Activated B cell treated with CpG ODN at 0.5 μM for 24 hours (primary cell): ENCODE measurements at regions of chr11 and their contacts with region 1.

Region 1: DNA sequence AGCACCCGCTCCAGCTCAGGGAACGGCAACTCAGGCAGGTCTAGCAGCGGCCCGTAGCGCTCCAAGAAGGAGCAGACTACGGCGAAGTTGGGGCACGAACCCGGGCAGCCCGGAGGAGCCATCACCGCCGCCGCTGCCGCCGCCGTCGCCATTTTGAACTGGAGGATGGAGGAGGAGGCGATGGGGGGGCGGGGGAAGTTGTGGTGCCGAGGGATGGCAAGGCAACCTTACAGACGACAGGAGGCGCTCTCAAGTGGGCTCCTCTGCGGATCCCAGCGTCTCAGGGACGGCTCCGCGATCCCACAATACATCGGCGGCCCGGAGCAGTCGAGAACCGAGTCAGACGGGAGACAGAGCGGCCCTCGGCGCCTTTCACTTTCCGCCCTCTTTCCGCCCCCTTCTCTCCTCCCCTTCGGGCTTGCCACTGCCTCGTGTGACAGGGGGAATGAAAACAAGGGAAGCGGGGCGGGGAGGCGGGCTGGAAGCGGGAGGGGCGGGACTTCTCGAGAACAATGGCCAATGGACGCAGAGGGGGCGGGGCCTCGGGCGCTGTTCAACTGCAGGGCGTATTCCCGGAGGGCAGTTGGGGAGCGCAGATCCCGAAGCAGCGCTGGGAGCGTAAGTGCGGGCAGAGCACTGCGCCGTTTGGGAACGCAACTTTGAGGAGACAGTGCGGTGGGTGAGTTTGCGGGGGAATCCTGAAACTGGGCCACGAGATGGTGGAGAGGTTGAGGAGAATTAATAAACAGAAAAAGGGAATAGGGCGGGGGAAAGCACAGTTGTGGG is at the starts of genes AAMDC and RSF1:
- DNase-seq: peak; percentile 85
- ATAC-seq: peak; percentile 82
- H3K4me3 Mint-ChIP-seq: peak within 1 kb of the TSS; percentile 97
- H3K27ac Mint-ChIP-seq: peak within 1 kb of the TSS; percentile 93
- H3K4me1 Mint-ChIP-seq: peaks cover 36% of the 10 kb centered on the region
- H3K27me3 Mint-ChIP-seq: no peaks in the 10 kb centered on the region
- CTCF ChIP-seq: no peak
- total RNA-seq, gene AAMDC: 3.8 and 4.4 TPM in 2 replicates
- total RNA-seq, gene RSF1: 65.9 and 68.8 TPM in 2 replicates

Region 2: DNA sequence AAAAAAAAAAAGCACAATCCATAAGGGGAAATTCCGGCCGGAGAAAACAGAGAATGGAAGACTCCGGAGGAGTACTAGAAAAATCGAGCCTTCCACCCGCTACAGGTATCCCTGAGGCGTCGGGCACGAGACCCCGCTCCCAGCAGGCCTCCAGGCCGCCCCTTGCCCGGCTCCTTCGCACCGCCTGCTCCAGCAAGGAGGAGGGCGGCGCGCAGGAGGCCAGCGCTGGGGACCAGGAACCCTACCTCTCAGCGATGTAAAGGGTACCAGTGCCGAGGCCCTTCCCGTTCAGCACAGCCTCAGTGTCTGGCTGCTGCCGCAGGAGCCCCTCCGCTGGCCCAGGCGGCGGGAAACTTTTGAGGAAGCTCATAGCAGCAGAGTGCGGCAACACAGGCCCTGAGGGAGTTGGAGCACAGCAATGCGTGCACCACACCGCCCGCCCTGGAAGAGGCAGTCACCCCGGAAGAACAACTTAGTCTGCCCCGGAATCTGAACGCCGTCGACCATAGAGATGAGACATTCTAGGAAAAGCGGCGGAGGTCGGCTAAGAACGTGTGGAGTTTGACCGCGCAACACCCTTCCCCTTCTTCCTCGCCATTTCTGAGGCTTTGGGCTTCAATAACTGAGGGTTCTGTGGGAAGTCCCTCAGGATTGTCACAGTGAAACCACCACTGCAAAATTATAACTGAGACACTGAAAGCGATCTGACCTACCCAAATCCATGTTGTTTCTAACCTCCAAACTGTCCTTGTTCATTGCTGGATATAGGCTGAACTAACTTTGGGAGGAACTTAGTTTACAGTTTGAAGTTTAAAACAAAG is 183.2 kb before region 1 on chr11 and contains the start of gene CLNS1A:
- CTCF ChIA-PET with region 1: no interaction called
- POLR2A ChIA-PET with region 1: no interaction called
- intact Hi-C with region 1: loop called (anchors 1 kb)
- DNase-seq: peak; percentile 70
- ATAC-seq: peak; percentile 99
- H3K4me3 Mint-ChIP-seq: peak within 1 kb of the TSS; percentile 96
- H3K27ac Mint-ChIP-seq: peak within 1 kb of the TSS; percentile 94
- H3K4me1 Mint-ChIP-seq: peaks cover 41% of the 10 kb centered on the region
- H3K27me3 Mint-ChIP-seq: no peaks in the 10 kb centered on the region
- CTCF ChIP-seq: no peak
- total RNA-seq, gene CLNS1A: 112 and 116 TPM in 2 replicates

Region 3: DNA sequence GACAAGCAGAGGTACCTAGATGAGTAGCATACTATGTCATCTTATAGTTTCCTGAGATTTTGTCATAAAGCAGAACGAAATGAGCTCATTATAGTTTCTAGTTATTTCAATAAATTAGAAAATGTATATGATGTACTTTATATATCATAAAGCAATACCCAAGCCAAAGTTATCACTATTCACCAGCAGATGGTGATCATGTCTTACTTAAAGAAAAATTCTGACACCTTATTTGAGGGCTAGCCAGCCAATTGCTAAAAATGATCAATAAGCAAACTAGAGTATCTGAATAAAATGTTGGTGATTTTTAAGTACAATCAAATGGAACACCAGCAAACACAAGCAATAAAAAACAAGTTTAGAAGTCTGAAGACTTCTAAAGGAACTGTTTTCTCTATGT is 44.3 kb before region 1 on chr11:
- CTCF ChIA-PET with region 1: no interaction called
- POLR2A ChIA-PET with region 1: no interaction called
- intact Hi-C with region 1: loop called (anchors 5 kb)
- DNase-seq: no peak
- ATAC-seq: no peak
- H3K4me3 Mint-ChIP-seq: no peak overlapping the region
- H3K27ac Mint-ChIP-seq: no peak overlapping the region
- H3K4me1 Mint-ChIP-seq: peaks cover 55% of the 10 kb centered on the region
- H3K27me3 Mint-ChIP-seq: no peaks in the 10 kb centered on the region
- CTCF ChIP-seq: no peak

Region 4: DNA sequence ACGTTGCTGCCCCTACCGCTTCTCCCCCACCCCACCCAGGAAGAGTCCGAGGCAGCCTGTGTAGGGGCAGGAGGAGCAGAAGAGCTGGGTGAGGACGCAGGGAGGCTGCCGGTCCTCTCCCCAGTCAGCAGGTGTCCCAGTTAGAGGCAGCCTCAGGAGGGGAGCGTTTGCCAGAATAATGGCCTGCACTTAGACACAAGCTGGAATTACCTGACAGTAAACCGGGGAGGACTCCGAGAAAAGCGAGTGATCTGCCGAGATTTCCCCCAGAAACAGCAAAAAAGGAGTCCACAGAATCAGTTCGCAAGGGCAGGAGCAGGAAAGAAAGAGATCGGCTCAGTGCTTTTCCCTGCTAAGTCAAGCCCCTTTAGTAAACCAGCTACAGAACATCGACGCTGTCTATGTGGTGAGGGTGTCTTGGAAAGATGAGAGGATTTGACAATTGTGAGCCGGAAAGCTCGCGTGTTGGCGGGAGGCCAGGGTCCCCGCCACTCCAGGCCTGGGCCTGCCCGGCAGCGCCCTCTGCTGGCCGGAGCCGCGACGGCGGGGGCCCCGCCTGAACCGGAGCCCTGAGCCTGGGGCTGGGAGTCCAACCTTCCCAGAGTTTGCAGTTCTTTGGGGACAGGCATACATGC is 225.2 kb after region 1 on chr11:
- CTCF ChIA-PET with region 1: no interaction called
- POLR2A ChIA-PET with region 1: no interaction called
- intact Hi-C with region 1: loop called (anchors 1 kb)
- DNase-seq: peak; percentile 81
- ATAC-seq: peak; percentile 98
- H3K4me3 Mint-ChIP-seq: peak overlapping the region; percentile 72
- H3K27ac Mint-ChIP-seq: no peak overlapping the region
- H3K4me1 Mint-ChIP-seq: peaks cover 6% of the 10 kb centered on the region
- H3K27me3 Mint-ChIP-seq: peaks cover 5% of the 10 kb centered on the region
- CTCF ChIP-seq: peak; percentile 95

Region 5: GRCh38 chr11:78139422-78140391 is 319.0 kb after region 1 on chr11 and contains the start of gene ALG8:
- CTCF ChIA-PET with region 1: no interaction called
- POLR2A ChIA-PET with region 1: interaction called, 6 read pairs
- intact Hi-C with region 1: loop called (anchors 5 kb)
- DNase-seq: peak; percentile 94
- ATAC-seq: peak; percentile 94
- H3K4me3 Mint-ChIP-seq: peak within 1 kb of the TSS; percentile 95
- H3K27ac Mint-ChIP-seq: peak within 1 kb of the TSS; percentile 92
- H3K4me1 Mint-ChIP-seq: peaks cover 49% of the 10 kb centered on the region
- H3K27me3 Mint-ChIP-seq: no peaks in the 10 kb centered on the region
- CTCF ChIP-seq: no peak
- total RNA-seq, gene ALG8: 42.8 and 46.0 TPM in 2 replicates

Region 6: DNA sequence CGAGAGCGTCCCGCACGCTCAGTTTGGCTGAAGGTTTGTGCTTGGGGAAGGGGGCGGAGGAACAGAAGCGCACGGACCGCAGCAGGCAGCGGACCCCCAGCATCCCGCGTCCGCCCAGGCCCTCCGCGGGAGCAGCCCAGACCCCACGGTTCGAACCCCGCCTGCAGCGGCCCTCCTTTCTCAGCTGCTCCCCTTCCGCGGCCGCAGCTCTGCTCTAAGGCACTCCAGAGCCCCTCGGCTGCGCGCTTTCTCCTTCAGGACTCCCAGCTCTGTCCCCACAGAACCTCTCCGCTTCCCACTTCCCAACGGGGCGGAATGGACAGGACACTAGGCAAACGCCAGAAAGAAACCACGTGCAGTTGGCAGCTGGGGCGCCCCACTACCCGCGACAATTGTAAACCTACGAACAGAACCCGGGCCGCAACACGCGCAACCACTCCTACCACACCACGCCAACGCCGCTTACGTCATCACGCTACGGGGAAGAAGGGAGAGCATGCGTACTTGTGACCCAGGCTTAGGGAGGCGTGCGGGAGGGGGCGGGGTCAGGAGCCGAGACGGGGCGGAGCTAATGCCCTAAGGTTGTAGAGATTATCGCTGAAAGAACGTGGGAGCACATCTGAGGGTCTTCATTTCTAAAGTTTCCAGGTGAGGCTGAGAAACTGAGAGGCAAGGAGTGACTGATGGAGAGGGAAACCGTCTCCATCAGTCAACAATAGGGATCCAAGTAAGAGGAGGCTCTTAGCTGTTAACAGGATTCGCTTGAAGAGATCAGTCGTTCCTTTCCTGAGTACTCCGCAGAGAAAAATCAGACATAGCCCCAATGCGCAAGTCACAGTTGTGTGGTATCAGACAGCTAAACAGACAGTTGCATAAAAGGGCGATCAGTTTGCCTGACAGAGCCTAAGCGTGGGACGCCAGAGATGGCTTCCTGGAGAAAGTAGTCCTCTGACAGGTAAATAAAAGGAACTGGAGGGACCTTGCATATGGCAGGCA is 753.9 kb after region 1 on chr11 and contains the start of gene NARS2:
- CTCF ChIA-PET with region 1: no interaction called
- POLR2A ChIA-PET with region 1: interaction called, 3 read pairs
- intact Hi-C with region 1: loop called (anchors 2 kb)
- DNase-seq: peak; percentile 90
- ATAC-seq: peak; percentile 99
- H3K4me3 Mint-ChIP-seq: peak within 1 kb of the TSS; percentile 93
- H3K27ac Mint-ChIP-seq: peak within 1 kb of the TSS; percentile 94
- H3K4me1 Mint-ChIP-seq: peaks cover 32% of the 10 kb centered on the region
- H3K27me3 Mint-ChIP-seq: no peaks in the 10 kb centered on the region
- CTCF ChIP-seq: no peak
- total RNA-seq, gene NARS2: 16.5 and 18.9 TPM in 2 replicates